Activated CD4-positive, alpha-beta memory T cell treated with anti-CD3 and anti-CD28 coated beads for 36 hours (primary cell): ENCODE measurements at regions of chr2 and their contacts with region 1.

Region 1: GRCh38 chr2:219552382-219553167 is 8.7 kb downstream of the TMEM198 start:
- DNase-seq: peak; percentile 85
- H3K4me3 Mint-ChIP-seq: peak overlapping the region; percentile 68
- H3K27ac Mint-ChIP-seq: no peak overlapping the region
- H3K4me1 Mint-ChIP-seq: peaks cover 10% of the 10 kb centered on the region
- H3K27me3 Mint-ChIP-seq: peaks cover 37% of the 10 kb centered on the region

Region 2: DNA sequence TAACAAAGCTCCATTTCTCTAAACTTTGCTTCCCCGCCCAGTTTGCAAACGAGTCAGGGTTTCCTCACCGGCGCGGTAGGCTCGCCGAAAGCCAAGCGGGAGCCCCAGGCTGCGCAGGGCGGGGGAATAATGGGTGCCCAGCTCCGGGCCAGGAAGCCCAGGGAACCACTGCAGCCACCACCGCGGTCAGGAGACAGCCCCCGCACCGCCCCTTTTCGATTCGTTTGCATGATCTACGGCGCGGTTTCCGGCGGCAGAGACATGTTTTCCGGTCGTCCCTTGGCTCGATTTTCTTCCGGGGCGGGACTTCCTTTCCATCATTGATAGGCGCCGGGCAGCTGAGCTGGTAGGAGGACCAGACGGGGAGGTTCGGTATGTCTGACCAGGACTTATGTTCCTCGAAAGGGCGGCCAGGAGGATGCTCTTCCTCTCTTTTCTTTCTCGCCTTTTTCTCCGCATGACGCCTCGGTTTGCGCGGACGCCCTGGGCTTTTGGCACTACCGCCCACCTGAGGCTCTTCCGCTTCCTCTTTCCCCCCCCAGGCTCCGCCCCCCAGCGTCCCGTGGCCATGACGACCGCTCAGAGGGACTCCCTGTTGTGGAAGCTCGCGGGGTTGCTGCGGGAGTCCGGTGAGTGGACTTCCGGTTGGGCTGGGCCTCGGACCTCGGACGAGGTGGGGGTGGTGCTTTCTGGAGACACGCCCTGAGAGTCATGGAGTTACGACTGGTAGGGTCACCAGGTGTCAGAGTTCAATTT is 45.2 kb after region 1 on chr2 and contains the start of gene STK11IP:
- CTCF ChIA-PET with region 1: no interaction called
- POLR2A ChIA-PET with region 1: no interaction called
- intact Hi-C with region 1: loop called (anchors 1 kb)
- DNase-seq: peak; percentile 96
- H3K4me3 Mint-ChIP-seq: peak within 1 kb of the TSS; percentile 88
- H3K27ac Mint-ChIP-seq: peak within 1 kb of the TSS; percentile 93
- H3K4me1 Mint-ChIP-seq: peaks cover 10% of the 10 kb centered on the region
- H3K27me3 Mint-ChIP-seq: peaks cover 4% of the 10 kb centered on the region
- total RNA-seq, gene STK11IP: 28.7 to 28.9 TPM

Region 3: GRCh38 chr2:219713108-219713507 is 160.5 kb after region 1 on chr2:
- CTCF ChIA-PET with region 1: no interaction called
- POLR2A ChIA-PET with region 1: no interaction called
- intact Hi-C with region 1: no loop called
- DNase-seq: no peak
- H3K4me3 Mint-ChIP-seq: no peak overlapping the region
- H3K27ac Mint-ChIP-seq: no peak overlapping the region
- H3K4me1 Mint-ChIP-seq: no peaks in the 10 kb centered on the region
- H3K27me3 Mint-ChIP-seq: peaks cover 4% of the 10 kb centered on the region